ENCODE measurements at regions of chr1 and their contacts with region 1.

Region 1: DNA sequence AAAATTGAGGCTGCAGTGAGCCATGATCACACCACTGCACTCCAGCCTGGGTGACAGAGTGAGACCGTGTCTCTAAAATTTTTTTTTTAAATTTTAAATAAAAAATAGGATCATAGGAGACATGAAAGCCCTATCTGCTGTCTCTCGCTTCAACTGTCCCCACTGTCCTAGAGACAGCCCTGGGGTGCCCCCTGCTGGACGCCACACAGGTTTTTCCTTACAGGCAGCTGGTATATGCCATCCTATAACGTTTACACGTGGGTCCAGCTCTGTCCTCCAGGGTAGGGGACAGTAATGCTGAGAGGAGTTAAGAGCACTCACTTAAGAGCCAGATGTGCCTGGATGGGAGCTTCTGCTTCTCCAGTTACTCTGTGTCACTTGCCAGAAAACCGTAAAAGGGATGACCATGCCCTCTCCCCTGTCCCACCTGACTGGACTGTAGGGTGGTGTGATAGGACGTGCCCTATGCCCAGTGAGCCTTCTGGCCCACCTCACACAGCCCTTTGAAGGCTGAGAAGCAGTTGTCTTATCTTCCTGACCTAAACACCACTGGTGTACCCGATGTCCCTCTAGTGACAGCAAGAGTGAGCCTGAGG is 8.5 kb downstream of the FBXO2 start:
- DNase-seq: peak; percentile 93
- ATAC-seq: peak; percentile 57
- H3K4me3 Mint-ChIP-seq: no peak overlapping the region
- H3K27ac Mint-ChIP-seq: no peak overlapping the region
- H3K4me1 Mint-ChIP-seq: peaks cover 10% of the 10 kb centered on the region
- H3K27me3 Mint-ChIP-seq: no peaks in the 10 kb centered on the region

Region 2: GRCh38 chr1:11320153-11320936 is 325.4 kb before region 1 on chr1:
- CTCF ChIA-PET with region 1: interaction called, 4 read pairs
- POLR2A ChIA-PET with region 1: no interaction called
- intact Hi-C with region 1: loop called in 1 of 2 experiments (anchors 1 kb)
- DNase-seq: peak; percentile 63
- ATAC-seq: peak; percentile 57
- H3K4me3 Mint-ChIP-seq: no peak overlapping the region
- H3K27ac Mint-ChIP-seq: no peak overlapping the region
- H3K4me1 Mint-ChIP-seq: no peaks in the 10 kb centered on the region
- H3K27me3 Mint-ChIP-seq: no peaks in the 10 kb centered on the region

Region 3: DNA sequence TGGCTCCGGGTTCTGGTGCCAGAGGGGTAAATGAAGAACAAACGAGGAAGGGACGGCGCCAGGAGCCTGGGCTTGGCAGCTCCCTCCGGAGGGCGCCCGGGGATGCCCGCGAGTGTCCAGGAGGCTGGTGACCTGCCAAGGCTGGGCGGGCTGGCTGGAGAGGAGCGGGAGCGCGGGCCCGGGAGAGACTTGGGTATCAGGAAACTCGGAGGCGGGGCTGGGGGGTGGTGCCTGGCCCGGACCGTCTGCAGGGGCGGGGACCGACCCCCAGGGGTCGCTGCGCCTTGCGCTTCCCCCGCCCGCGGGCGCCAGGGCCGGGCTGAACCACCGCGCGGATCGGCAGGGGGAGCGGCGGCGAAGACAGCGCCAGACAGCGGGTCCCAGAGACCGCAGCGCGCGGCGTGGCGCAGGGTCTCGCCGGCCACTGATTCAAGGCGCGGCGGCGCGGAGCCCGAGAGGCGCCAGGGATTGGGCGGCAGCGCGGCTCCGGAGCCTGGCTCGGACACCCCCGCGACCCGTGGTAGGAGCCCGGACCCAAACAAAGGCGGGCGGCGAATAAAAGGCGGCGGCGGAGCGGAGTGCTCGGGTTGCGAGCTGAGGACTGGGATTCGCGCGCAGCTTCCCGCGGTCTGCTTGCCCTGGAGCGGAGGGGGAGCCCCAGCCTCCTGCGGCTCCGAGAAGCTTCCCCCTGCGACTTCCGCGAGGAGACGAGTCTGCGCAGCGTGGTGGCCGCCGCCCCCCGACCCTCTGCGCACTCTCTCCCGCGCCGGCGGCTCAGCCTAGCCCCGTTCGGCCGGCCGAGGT is 167.0 kb before region 1 on chr1 and contains the start of gene DISP3:
- CTCF ChIA-PET with region 1: interaction called, 5 read pairs
- POLR2A ChIA-PET with region 1: no interaction called
- intact Hi-C with region 1: loop called (anchors 1 kb)
- DNase-seq: peak; percentile 89
- ATAC-seq: peak; percentile 89
- H3K4me3 Mint-ChIP-seq: peak within 1 kb of the TSS; percentile 53
- H3K27ac Mint-ChIP-seq: no peak within 1 kb of the TSS
- H3K4me1 Mint-ChIP-seq: peaks cover 5% of the 10 kb centered on the region
- H3K27me3 Mint-ChIP-seq: peaks cover 33% of the 10 kb centered on the region
- total RNA-seq, gene DISP3: 0.55 to 0.58 TPM

Region 4: GRCh38 chr1:11719313-11720032 is 73.7 kb after region 1 on chr1:
- CTCF ChIA-PET with region 1: interaction called, 34 read pairs
- POLR2A ChIA-PET with region 1: no interaction called
- intact Hi-C with region 1: loop called (anchors 1 kb)
- DNase-seq: peak; percentile 91
- ATAC-seq: peak; percentile 85
- H3K4me3 Mint-ChIP-seq: peak overlapping the region; percentile 70
- H3K27ac Mint-ChIP-seq: peak overlapping the region; percentile 71
- H3K4me1 Mint-ChIP-seq: peaks cover 13% of the 10 kb centered on the region
- H3K27me3 Mint-ChIP-seq: no peaks in the 10 kb centered on the region

Region 5: DNA sequence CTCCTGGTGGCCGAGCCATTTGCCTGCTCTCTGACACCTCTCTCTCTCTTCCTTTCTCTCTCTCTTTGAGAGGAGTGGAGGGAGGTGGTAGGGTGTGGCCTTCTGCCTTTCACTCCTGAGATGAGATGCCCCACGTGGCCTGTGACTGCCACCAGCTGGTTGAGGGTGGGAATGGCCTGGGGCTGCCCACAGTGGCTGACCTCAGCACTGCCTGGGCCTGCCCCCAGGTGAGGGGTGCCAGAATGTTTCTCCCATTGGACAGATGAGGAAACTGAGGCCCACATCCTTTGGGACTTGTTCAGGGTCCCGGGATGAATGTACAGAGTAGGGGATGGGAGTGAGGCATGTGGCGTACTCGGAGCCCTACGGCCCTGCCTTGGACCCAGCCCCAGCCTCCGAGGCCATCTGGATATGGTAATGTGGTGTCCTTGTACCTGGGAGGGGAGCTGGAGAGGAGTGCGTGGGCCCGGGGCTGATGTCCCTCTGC is 103.5 kb after region 1 on chr1:
- CTCF ChIA-PET with region 1: interaction called, 3 read pairs
- POLR2A ChIA-PET with region 1: interaction called, 4 read pairs
- intact Hi-C with region 1: loop called in 1 of 2 experiments (anchors 1 kb)
- DNase-seq: peak; percentile 84
- ATAC-seq: peak; percentile 98
- H3K4me3 Mint-ChIP-seq: no peak overlapping the region
- H3K27ac Mint-ChIP-seq: peak overlapping the region; percentile 74
- H3K4me1 Mint-ChIP-seq: peaks cover 6% of the 10 kb centered on the region
- H3K27me3 Mint-ChIP-seq: no peaks in the 10 kb centered on the region

Region 6: GRCh38 chr1:11967028-11967547 is 321.3 kb after region 1 on chr1:
- CTCF ChIA-PET with region 1: no interaction called
- POLR2A ChIA-PET with region 1: no interaction called
- intact Hi-C with region 1: no loop called
- DNase-seq: peak; percentile 29
- ATAC-seq: peak; percentile 44
- H3K4me3 Mint-ChIP-seq: no peak overlapping the region
- H3K27ac Mint-ChIP-seq: no peak overlapping the region
- H3K4me1 Mint-ChIP-seq: no peaks in the 10 kb centered on the region
- H3K27me3 Mint-ChIP-seq: no peaks in the 10 kb centered on the region